Endothelial cell of umbilical vein (primary cell): ENCODE measurements at regions of chr4 and their contacts with region 1.

Region 1: GRCh38 chr4:102868781-102869568 is at the start of gene CISD2:
- DNase-seq: peak; percentile 94
- H3K4me3 ChIP-seq: peak within 1 kb of the TSS; percentile 43 to 88 (median 78)
- H3K27ac ChIP-seq: peak within 1 kb of the TSS; percentile 76
- H3K4me1 ChIP-seq: peaks cover 25% of the 10 kb centered on the region
- H3K27me3 ChIP-seq: no peaks in the 10 kb centered on the region
- CTCF ChIP-seq: no peak
- POLR2A ChIP-seq: peak; percentile 91
- total RNA-seq, gene CISD2: 26.5 and 28.4 TPM in 2 replicates

Region 2: DNA sequence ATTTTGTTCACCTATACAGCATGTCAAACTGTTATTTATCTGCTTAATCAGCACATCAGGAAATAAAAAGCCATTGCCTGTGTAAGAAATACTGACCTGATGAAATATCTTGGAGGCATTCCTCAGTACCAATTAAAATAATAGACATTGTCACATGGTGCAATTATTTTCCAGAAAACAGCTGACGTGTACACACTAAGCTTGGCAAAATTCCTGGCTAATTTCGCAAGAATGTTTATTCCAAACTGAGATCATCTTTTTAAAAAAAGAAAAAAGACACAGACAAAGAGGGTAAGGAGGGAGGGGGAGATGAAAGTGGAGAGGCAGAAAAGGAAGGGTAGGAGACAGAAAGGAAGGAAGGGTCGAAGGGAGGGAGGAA is 429.8 kb before region 1 on chr4:
- CTCF ChIA-PET with region 1: no interaction called
- POLR2A ChIA-PET with region 1: no interaction called
- dilution Hi-C with region 1: no loop called
- intact Hi-C with region 1: loop called (anchors 2 kb)
- DNase-seq: peak; percentile 77
- H3K4me3 ChIP-seq: no peak overlapping the region
- H3K27ac ChIP-seq: no peak overlapping the region
- H3K4me1 ChIP-seq: no peaks in the 10 kb centered on the region
- H3K27me3 ChIP-seq: no peaks in the 10 kb centered on the region
- CTCF ChIP-seq: no peak
- POLR2A ChIP-seq: no peak

Region 3: DNA sequence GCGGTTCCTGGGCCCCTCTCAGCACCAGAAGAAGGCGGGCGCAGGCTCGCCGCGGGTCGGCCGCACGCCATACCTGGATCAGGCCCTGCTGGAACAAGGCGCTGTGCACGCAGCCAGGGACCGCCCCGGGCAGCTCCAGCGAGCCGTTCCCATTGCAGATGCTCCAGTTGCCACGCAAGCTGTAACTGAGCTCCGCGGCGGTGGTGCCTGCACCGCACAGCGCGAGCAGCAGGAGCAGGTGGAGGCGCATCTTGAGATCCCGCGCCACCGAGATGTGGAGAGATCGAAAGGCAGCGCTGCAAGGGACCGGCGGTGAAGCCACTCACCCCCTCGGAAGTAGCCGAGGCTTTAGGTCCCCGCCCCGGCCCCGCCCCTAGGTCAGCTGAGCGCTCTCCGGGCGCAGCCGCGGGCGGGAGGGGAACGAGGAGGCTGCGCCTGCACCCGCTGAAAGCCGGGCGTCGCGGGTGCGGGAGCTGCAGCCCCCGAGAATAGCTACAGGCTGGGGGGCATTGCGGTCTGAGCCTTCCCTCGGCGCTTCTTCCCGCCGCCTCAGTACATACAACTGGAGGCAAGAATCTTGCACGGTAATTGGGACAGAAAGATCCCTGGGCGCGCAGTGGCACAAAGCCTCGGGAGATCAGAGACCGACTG is 108.2 kb before region 1 on chr4 and contains the start of gene MANBA:
- CTCF ChIA-PET with region 1: no interaction called
- POLR2A ChIA-PET with region 1: no interaction called
- dilution Hi-C with region 1: no loop called
- intact Hi-C with region 1: loop called (anchors 5 kb)
- DNase-seq: peak; percentile 70
- H3K4me3 ChIP-seq: peak within 1 kb of the TSS; percentile 56 to 65 (median 59)
- H3K27ac ChIP-seq: no peak within 1 kb of the TSS
- H3K4me1 ChIP-seq: peaks cover 17% of the 10 kb centered on the region
- H3K27me3 ChIP-seq: peaks cover 0 to 2% of the 10 kb centered on the region in 2 experiments
- CTCF ChIP-seq: no peak
- POLR2A ChIP-seq: peak; percentile 51
- total RNA-seq, gene MANBA: 7.7 and 8.3 TPM in 2 replicates

Region 4: DNA sequence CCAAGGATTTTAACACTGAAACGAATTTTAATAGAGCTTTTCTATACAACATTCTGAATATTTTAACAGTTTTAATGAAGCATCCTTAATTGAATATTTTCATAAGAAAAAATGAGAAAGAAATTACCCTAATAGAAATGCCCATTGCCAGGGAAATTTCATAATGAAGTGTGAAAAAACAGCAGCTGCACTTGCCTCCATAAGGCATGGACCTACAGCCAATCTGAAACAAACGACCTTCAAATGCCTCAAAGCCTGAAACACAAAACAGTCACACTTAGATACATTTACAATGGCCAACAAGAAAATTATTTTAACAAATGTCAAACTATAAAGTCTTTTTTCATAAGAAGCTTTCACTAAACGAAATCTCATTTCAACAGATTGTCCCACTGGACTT is 76.1 kb after region 1 on chr4:
- CTCF ChIA-PET with region 1: no interaction called
- POLR2A ChIA-PET with region 1: no interaction called
- dilution Hi-C with region 1: no loop called
- intact Hi-C with region 1: no loop called
- DNase-seq: no peak
- H3K4me3 ChIP-seq: no peak overlapping the region
- H3K27ac ChIP-seq: no peak overlapping the region
- H3K4me1 ChIP-seq: no peaks in the 10 kb centered on the region
- H3K27me3 ChIP-seq: no peaks in the 10 kb centered on the region
- CTCF ChIP-seq: no peak
- POLR2A ChIP-seq: no peak

Region 5: GRCh38 chr4:103019308-103020124 is 150.5 kb after region 1 on chr4 and contains the start of gene SLC9B1:
- CTCF ChIA-PET with region 1: no interaction called
- POLR2A ChIA-PET with region 1: no interaction called
- dilution Hi-C with region 1: no loop called
- intact Hi-C with region 1: loop called (anchors 2 kb)
- DNase-seq: peak; percentile 96
- H3K4me3 ChIP-seq: peak within 1 kb of the TSS; percentile 28 to 62 (median 48)
- H3K27ac ChIP-seq: peak within 1 kb of the TSS; percentile 68
- H3K4me1 ChIP-seq: peaks cover 8% of the 10 kb centered on the region
- H3K27me3 ChIP-seq: no peaks in the 10 kb centered on the region
- CTCF ChIP-seq: no peak
- POLR2A ChIP-seq: peak; percentile 79
- total RNA-seq, gene SLC9B1: 0.49 TPM in 1 of 2 replicates, not detected in the other